ENCODE measurements at regions of chr11 and their contacts with region 1.

Region 1: GRCh38 chr11:124837491-124837856 is 27.8 kb upstream of the ROBO3 start:
- DNase-seq: peak; percentile 76
- H3K4me3 ChIP-seq: no peak overlapping the region
- CTCF ChIP-seq: peak; percentile 77

Region 2: DNA sequence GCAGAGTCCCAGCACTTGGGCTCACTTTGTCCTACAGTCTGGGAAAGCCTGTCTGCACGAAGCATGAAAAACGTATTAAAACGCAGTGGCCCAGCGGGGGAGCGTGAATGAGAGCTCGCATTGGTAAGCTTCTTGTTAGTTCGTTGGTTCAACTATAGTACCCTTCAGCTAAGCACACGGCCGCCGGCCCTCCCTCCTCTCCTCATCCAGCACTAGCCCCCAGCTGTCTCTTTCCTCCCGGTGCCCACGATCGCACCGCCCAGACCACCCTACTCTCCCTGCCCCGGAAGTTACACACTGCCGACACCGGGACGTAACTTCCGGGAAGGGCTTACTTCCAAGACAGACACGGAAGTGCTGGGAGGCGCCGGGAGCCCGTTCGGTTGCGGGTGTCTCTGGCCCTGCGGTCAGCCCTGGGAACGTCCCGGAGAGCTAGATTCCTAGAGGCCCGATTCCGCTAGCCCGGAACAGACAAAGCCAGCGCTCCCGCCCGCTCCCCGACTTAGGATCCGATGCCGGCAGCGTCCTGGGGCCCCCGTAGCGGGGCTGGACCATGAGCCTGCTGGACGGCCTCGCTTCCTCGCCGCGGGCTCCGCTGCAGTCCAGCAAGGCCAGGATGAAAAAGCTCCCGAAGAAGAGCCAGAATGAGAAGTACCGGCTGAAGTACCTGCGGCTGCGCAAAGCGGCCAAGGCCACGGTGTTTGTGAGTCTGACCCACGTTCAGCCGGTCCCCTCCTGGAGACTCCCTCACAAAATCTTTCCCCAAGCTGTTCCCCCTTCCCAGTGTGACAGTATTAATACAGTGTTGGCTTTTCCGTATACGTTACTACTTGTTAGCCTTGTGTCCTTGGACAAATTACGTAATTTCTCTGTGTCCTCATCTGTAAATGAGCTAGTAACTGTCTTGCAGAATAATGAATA is 214.7 kb before region 1 on chr11 and contains the start of gene TBRG1:
- in situ Hi-C with region 1: loop called (anchors 5 kb)
- DNase-seq: peak; percentile 78
- H3K4me3 ChIP-seq: peak within 1 kb of the TSS; percentile 86
- CTCF ChIP-seq: no peak